Naive thymus-derived CD4-positive, alpha-beta T cell (primary cell): ENCODE measurements at regions of chr7 and their contacts with region 1.

Region 1: GRCh38 chr7:44460325-44460724 is 30.1 kb downstream of the NUDCD3 start:
- DNase-seq: peak in 8 of 9 donors; percentile 37 to 89 (median 85)
- ATAC-seq: peak; percentile 98
- H3K4me3 ChIP-seq: peak overlapping the region; percentile 28
- H3K4me3 Mint-ChIP-seq: peak overlapping the region; percentile 57 to 91 (median 72)
- H3K27ac ChIP-seq: peak overlapping the region; percentile 62
- H3K27ac Mint-ChIP-seq: peak overlapping the region; percentile 16 to 96 (median 79)
- H3K4me1 ChIP-seq: peaks cover 36 to 55% of the 10 kb centered on the region in 2 donors
- H3K4me1 Mint-ChIP-seq: peaks cover 48 to 96% (median 85%) of the 10 kb centered on the region in 7 donors
- H3K27me3 ChIP-seq: no peaks in the 10 kb centered on the region
- H3K27me3 Mint-ChIP-seq: no peaks in the 10 kb centered on the region

Region 2: DNA sequence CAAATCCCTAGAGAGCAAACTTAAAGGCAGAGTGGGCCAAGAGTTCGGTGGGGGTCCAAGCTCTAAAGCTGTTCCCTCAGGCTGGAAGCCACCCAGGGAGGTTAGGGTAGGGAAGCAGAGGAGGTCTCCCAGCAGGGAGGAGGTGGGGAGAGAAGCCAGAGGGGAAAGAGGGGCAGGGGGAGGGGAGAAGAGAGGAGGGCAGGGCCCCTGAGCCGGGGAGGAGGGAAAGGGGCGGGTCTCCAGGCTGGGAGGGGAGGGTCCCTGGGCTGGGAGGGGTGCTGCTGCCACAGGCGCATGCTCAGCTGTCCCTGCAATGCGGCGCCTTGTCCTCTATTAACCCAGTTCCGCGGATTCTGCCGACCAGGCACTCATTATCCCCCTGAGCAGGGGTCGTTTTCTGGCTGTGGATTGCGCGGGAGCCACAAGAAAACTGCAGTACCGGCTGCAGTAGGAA is 184.3 kb before region 1 on chr7:
- CTCF ChIA-PET with region 1: no interaction called
- POLR2A ChIA-PET with region 1: no interaction called
- intact Hi-C with region 1: no loop called
- DNase-seq: no peak
- ATAC-seq: no peak
- H3K4me3 ChIP-seq: no peak overlapping the region
- H3K4me3 Mint-ChIP-seq: no peak overlapping the region
- H3K27ac ChIP-seq: no peak overlapping the region
- H3K27ac Mint-ChIP-seq: no peak overlapping the region
- H3K4me1 ChIP-seq: no peaks in the 10 kb centered on the region
- H3K4me1 Mint-ChIP-seq: no peaks in the 10 kb centered on the region
- H3K27me3 ChIP-seq: no peaks in the 10 kb centered on the region
- H3K27me3 Mint-ChIP-seq: peaks cover 0 to 3% (median 0%) of the 10 kb centered on the region in 5 donors

Region 3: GRCh38 chr7:44415047-44415446 is 45.3 kb before region 1 on chr7:
- CTCF ChIA-PET with region 1: no interaction called
- POLR2A ChIA-PET with region 1: no interaction called
- intact Hi-C with region 1: loop called in 1 of 2 experiments (anchors 10 kb)
- DNase-seq: no peak
- ATAC-seq: no peak
- H3K4me3 ChIP-seq: no peak overlapping the region
- H3K4me3 Mint-ChIP-seq: no peak overlapping the region
- H3K27ac ChIP-seq: no peak overlapping the region
- H3K27ac Mint-ChIP-seq: peak overlapping the region in 2 of 9 donors; percentile 6 to 28
- H3K4me1 ChIP-seq: no peaks in the 10 kb centered on the region
- H3K4me1 Mint-ChIP-seq: peaks cover 13 to 55% (median 43%) of the 10 kb centered on the region in 7 donors
- H3K27me3 ChIP-seq: no peaks in the 10 kb centered on the region
- H3K27me3 Mint-ChIP-seq: no peaks in the 10 kb centered on the region

Region 4: GRCh38 chr7:44431091-44431608 is 29.2 kb before region 1 on chr7:
- CTCF ChIA-PET with region 1: no interaction called
- POLR2A ChIA-PET with region 1: interaction called, 3 read pairs
- intact Hi-C with region 1: loop called in 1 of 2 experiments (anchors 2 kb)
- DNase-seq: peak in 3 of 9 donors; percentile 8 to 14 (median 12)
- ATAC-seq: peak; percentile 34
- H3K4me3 ChIP-seq: no peak overlapping the region
- H3K4me3 Mint-ChIP-seq: no peak overlapping the region
- H3K27ac ChIP-seq: no peak overlapping the region
- H3K27ac Mint-ChIP-seq: peak overlapping the region in 5 of 9 donors; percentile 36 to 86 (median 62)
- H3K4me1 ChIP-seq: no peaks in the 10 kb centered on the region
- H3K4me1 Mint-ChIP-seq: peaks cover 18 to 69% (median 60%) of the 10 kb centered on the region in 7 donors
- H3K27me3 ChIP-seq: no peaks in the 10 kb centered on the region
- H3K27me3 Mint-ChIP-seq: no peaks in the 10 kb centered on the region

Region 5: DNA sequence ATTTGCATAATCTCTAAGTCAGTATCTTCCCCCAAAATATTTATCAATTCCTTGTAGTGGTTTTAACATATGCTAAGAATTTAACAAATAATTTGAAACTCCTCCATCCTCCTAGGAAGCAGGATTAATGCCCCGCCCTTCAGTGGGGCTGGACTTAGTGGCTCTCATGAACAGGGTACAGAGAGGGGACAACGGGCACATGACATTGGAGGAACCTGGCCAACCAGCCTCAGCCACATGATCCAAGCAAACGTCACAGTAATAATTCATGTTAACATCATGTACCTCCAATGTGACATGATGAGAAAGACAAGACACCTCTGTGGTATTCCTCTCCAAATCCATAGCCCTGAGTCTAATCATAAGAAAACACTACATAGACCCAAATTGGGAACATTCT is 20.4 kb before region 1 on chr7:
- CTCF ChIA-PET with region 1: no interaction called
- POLR2A ChIA-PET with region 1: interaction called, 3 read pairs
- intact Hi-C with region 1: loop called in 1 of 2 experiments (anchors 2 kb)
- DNase-seq: no peak
- ATAC-seq: no peak
- H3K4me3 ChIP-seq: no peak overlapping the region
- H3K4me3 Mint-ChIP-seq: no peak overlapping the region
- H3K27ac ChIP-seq: no peak overlapping the region
- H3K27ac Mint-ChIP-seq: peak overlapping the region in 6 of 9 donors; percentile 0 to 81 (median 54)
- H3K4me1 ChIP-seq: peaks cover 0 to 13% of the 10 kb centered on the region in 2 donors
- H3K4me1 Mint-ChIP-seq: peaks cover 31 to 86% (median 76%) of the 10 kb centered on the region in 7 donors
- H3K27me3 ChIP-seq: no peaks in the 10 kb centered on the region
- H3K27me3 Mint-ChIP-seq: no peaks in the 10 kb centered on the region

Region 6: DNA sequence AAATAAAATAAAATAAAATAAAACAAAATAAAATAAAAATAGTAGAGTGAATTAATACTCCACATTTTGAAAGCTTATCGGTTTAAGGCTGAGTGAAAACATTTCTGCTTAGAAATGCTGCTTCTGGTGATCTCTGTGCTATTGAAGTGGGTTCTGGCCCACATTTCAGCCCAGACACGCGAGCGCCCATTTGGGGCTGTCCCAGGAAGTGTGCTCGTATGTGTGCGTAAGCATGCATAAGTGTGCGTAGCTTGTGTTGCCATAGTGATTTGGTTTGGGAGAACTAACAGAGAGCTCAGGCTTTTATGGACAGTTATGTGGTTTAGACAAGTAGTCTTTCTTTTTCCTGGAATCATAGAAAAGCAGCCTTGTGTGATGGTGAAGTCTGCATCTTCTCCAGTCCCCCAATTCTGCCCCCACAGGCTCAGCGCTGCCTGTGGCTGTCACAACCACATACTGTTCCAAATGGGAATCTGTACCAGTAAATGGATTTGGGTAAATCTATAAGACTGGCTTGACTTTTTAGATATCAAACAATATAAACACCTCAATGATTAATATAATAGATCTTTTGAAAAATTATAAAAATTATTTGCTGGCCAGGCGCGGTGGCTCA is 454.8 kb after region 1 on chr7:
- CTCF ChIA-PET with region 1: no interaction called
- POLR2A ChIA-PET with region 1: no interaction called
- intact Hi-C with region 1: no loop called
- DNase-seq: peak in 8 of 9 donors; percentile 44 to 87 (median 74)
- ATAC-seq: peak; percentile 99
- H3K4me3 ChIP-seq: no peak overlapping the region
- H3K4me3 Mint-ChIP-seq: peak overlapping the region in 7 of 10 donors; percentile 12 to 71 (median 53)
- H3K27ac ChIP-seq: peak overlapping the region; percentile 48
- H3K27ac Mint-ChIP-seq: peak overlapping the region in 8 of 9 donors; percentile 61 to 92 (median 84)
- H3K4me1 ChIP-seq: no peaks in the 10 kb centered on the region
- H3K4me1 Mint-ChIP-seq: peaks cover 0 to 28% (median 5%) of the 10 kb centered on the region in 7 donors
- H3K27me3 ChIP-seq: no peaks in the 10 kb centered on the region
- H3K27me3 Mint-ChIP-seq: no peaks in the 10 kb centered on the region